T-cell (primary cell): ENCODE measurements at regions of chr15 and their contacts with region 1.

Region 1: GRCh38 chr15:84697236-84697990 is 18.5 kb downstream of the SEC11A start:
- DNase-seq: no peak
- ATAC-seq: no peak
- H3K4me3 ChIP-seq: no peak overlapping the region
- H3K4me3 Mint-ChIP-seq: no peak overlapping the region
- H3K27ac ChIP-seq: no peak overlapping the region
- H3K27ac Mint-ChIP-seq: peak overlapping the region; percentile 0 to 56
- H3K4me1 ChIP-seq: peaks cover 0 to 13% of the 10 kb centered on the region in 2 experiments
- H3K4me1 Mint-ChIP-seq: peaks cover 50 to 66% (median 62%) of the 10 kb centered on the region in 3 donors
- H3K27me3 ChIP-seq: no peaks in the 10 kb centered on the region
- H3K27me3 Mint-ChIP-seq: no peaks in the 10 kb centered on the region

Region 2: GRCh38 chr15:84671211-84671610 is 26.2 kb before region 1 on chr15:
- CTCF ChIA-PET with region 1: no interaction called
- POLR2A ChIA-PET with region 1: interaction called in 1 of 2 experiments, 13 read pairs
- DNase-seq: no peak
- ATAC-seq: no peak
- H3K4me3 ChIP-seq: no peak overlapping the region
- H3K4me3 Mint-ChIP-seq: no peak overlapping the region
- H3K27ac ChIP-seq: no peak overlapping the region
- H3K27ac Mint-ChIP-seq: peak overlapping the region in 1 of 2 donors; percentile 47
- H3K4me1 ChIP-seq: no peaks in the 10 kb centered on the region
- H3K4me1 Mint-ChIP-seq: peaks cover 0 to 14% (median 7%) of the 10 kb centered on the region in 3 donors
- H3K27me3 ChIP-seq: no peaks in the 10 kb centered on the region
- H3K27me3 Mint-ChIP-seq: no peaks in the 10 kb centered on the region